ENCODE measurements at regions of chr12 and their contacts with region 1.

Region 1: DNA sequence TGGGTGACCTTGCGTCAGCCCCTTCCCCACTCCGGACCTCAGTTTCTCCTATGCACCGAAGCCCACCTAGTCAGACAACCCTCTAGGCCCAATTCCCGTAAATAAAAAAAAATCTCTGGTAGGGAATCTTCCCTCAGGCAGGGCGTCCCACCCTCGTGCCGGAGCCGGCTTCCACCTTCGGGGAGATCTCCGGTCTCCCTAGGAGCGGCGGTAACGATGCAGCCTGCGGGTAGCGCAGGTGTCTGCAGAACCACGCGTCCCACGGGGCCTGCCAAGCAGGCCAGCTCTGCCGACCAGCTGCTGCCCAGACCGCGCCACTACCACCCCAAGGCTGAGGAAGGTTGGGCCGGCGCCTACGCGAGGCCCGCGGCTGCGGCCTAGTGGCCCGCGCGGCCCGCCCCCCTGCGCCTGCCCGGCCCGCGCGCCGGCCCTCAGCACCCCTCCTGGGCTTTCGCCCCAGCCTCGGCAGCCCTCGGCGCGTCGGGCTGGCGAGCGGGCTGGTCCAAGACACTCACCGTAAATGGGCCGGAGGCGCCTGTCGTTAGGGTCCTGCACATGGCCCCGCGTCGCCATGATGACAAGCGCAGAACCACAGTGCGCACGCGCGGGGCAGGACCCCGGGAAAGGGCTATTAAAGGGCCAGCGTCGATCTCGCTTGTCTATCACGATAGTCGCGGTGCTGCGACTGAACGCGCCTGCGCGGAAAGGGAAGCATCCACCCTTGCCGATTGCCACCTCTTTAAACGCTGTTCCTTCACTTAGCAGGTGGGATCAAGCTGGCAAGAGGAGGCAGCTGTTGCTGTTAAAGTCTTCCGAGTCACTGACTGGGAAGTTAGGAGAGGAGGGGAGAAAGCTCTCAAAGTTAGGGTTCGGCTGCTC is at the start of gene NAA25:
- DNase-seq: peak; percentile 89
- H3K4me3 ChIP-seq: peak within 1 kb of the TSS; percentile 81 to 96 (median 95)
- H3K27ac ChIP-seq: peak within 1 kb of the TSS; percentile 74
- H3K4me1 ChIP-seq: peaks cover 10% of the 10 kb centered on the region
- H3K27me3 ChIP-seq: no peaks in the 10 kb centered on the region
- CTCF ChIP-seq: no peak
- POLR2A ChIP-seq: peak; percentile 36
- total RNA-seq, gene NAA25: 25.5 and 26.6 TPM in 2 replicates

Region 2: GRCh38 chr12:112012775-112013600 is 95.5 kb before region 1 on chr12 and contains the starts of genes ERP29 and TMEM116:
- CTCF ChIA-PET with region 1: interaction called, 4 read pairs
- POLR2A ChIA-PET with region 1: no interaction called
- dilution Hi-C with region 1: no loop called
- intact Hi-C with region 1: loop called (anchors 5 kb)
- DNase-seq: peak; percentile 100
- H3K4me3 ChIP-seq: peak within 1 kb of the TSS; percentile 72 to 81 (median 77)
- H3K27ac ChIP-seq: peak within 1 kb of the TSS; percentile 57
- H3K4me1 ChIP-seq: peaks cover 26% of the 10 kb centered on the region
- H3K27me3 ChIP-seq: no peaks in the 10 kb centered on the region
- CTCF ChIP-seq: peak; percentile 42 to 55
- POLR2A ChIP-seq: peak; percentile 99
- total RNA-seq, gene ERP29: 108 and 116 TPM in 2 replicates
- total RNA-seq, gene TMEM116: 1.6 TPM in 2 replicates

Region 3: GRCh38 chr12:112029301-112029700 is 79.1 kb before region 1 on chr12:
- CTCF ChIA-PET with region 1: no interaction called
- POLR2A ChIA-PET with region 1: interaction called, 11 read pairs
- dilution Hi-C with region 1: no loop called
- intact Hi-C with region 1: no loop called
- DNase-seq: no peak
- H3K4me3 ChIP-seq: no peak overlapping the region
- H3K27ac ChIP-seq: no peak overlapping the region
- H3K4me1 ChIP-seq: peaks cover 10% of the 10 kb centered on the region
- H3K27me3 ChIP-seq: no peaks in the 10 kb centered on the region
- CTCF ChIP-seq: no peak
- POLR2A ChIP-seq: no peak

Region 4: DNA sequence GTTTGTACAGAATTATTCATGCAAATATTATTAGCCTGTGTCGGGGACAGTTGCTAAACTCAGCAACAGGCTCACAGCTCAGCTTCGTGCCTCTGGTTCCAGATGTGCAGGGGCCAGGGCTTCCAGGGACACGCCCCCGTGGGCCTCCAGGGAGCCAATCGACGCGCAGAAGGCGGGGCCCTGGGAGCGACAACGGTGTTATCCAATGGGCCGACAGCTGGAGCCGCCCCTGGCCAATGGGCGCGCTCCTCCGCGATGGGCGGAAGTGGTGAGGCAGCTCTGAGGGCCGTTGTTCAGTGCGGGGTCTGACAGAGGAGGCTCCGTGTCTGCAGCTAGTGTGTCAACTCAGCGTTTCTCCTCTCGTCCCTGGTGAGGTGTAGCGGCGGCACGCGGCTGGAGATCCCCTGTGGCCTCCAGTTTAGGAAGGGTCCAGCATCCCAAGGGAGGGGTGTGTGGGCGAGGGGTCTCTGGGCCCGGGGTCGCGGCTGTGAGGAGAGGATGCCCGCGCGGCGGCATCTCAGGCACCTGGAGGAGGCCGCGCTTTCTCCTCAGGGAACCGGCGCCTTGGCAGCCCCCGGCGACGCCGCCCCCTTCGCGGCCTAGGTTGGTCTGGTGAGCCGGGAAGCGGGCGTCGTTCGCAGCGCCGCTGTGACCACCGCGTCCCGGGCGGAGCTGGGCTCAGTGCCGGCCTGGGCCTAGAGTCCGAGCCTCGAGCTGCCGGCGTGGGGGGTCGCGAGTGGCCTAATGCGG is 17.0 kb after region 1 on chr12 and contains the start of gene TRAFD1:
- CTCF ChIA-PET with region 1: interaction called, 12 read pairs
- POLR2A ChIA-PET with region 1: interaction called, 7 read pairs
- dilution Hi-C with region 1: no loop called
- intact Hi-C with region 1: loop called (anchors 2 kb)
- DNase-seq: peak; percentile 99
- H3K4me3 ChIP-seq: peak within 1 kb of the TSS; percentile 52 to 64 (median 61)
- H3K27ac ChIP-seq: peak within 1 kb of the TSS; percentile 44
- H3K4me1 ChIP-seq: peaks cover 14% of the 10 kb centered on the region
- H3K27me3 ChIP-seq: peaks cover 0 to 2% of the 10 kb centered on the region in 2 experiments
- CTCF ChIP-seq: no peak
- POLR2A ChIP-seq: peak; percentile 98
- total RNA-seq, gene TRAFD1: 22.4 and 24.9 TPM in 2 replicates

Measured in endothelial cell of umbilical vein (primary cell).